ENCODE measurements at regions of chr14 and their contacts with region 1.

Region 1: DNA sequence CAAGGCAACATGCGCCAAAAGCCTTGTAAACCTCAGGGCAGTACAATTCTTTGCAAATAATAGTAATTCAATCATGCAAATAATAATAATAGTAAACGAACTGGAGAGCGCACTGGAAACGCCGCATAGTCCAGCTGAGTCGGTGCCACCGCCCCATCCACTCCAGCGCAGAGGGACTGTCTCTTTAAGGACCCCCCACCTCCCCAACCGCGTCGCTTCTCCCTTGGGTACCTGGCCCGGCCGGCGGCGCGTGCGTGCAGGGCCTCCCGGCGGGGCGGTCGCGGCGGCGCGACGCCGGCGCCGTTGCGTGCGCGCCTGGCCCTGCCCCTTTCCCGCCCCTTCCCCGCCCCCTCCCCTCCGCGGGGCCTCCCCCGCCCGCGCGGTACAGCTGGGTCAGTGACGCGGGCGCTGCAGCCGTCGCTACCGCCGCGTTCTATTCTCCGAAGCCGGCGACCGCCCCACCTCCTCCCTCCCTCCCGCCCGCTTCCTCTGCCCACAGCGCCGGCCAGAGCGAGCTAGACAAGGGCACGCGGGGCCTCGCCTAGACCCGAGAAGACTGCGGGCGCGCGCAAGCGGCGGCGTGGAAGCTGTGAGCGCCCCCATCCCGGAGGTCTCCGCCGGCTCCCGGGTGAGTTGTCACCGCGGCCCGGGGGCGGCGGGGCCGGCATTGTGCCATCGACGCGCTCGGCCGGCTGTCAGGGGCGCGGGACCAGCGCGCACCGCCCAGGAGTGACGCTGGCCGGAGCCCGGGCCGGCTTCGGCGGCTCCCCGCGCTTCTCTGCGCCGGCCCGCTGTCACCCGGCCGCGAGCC is at the start of gene SUSD6:
- DNase-seq: peak; percentile 79 to 94 (median 87)
- ATAC-seq: peak; percentile 84
- H3K4me3 ChIP-seq: peak within 1 kb of the TSS; percentile 57 to 67
- H3K4me3 Mint-ChIP-seq: peak within 1 kb of the TSS; percentile 89
- H3K27ac ChIP-seq: peak within 1 kb of the TSS; percentile 62 to 90
- H3K27ac Mint-ChIP-seq: peak within 1 kb of the TSS; percentile 100
- H3K4me1 ChIP-seq: peaks cover 54% of the 10 kb centered on the region
- H3K4me1 Mint-ChIP-seq: peaks cover 54% of the 10 kb centered on the region
- H3K27me3 ChIP-seq: no peaks in the 10 kb centered on the region
- H3K27me3 Mint-ChIP-seq: no peaks in the 10 kb centered on the region
- CTCF ChIP-seq: no peak
- total RNA-seq, gene SUSD6: 86.4 to 92.2 TPM

Region 2: GRCh38 chr14:69153131-69153872 is 458.1 kb before region 1 on chr14:
- CTCF ChIA-PET with region 1: no interaction called
- POLR2A ChIA-PET with region 1: no interaction called
- intact Hi-C with region 1: loop called (anchors 2 kb)
- DNase-seq: peak; percentile 87 to 98 (median 93)
- ATAC-seq: peak; percentile 91
- H3K4me3 ChIP-seq: peak overlapping the region; percentile 93 to 95
- H3K4me3 Mint-ChIP-seq: peak overlapping the region; percentile 89
- H3K27ac ChIP-seq: peak overlapping the region; percentile 51 to 69
- H3K27ac Mint-ChIP-seq: peak overlapping the region; percentile 95
- H3K4me1 ChIP-seq: peaks cover 36% of the 10 kb centered on the region
- H3K4me1 Mint-ChIP-seq: peaks cover 33% of the 10 kb centered on the region
- H3K27me3 ChIP-seq: no peaks in the 10 kb centered on the region
- H3K27me3 Mint-ChIP-seq: no peaks in the 10 kb centered on the region
- CTCF ChIP-seq: no peak

Region 3: GRCh38 chr14:69535230-69535848 is 76.1 kb before region 1 on chr14:
- CTCF ChIA-PET with region 1: no interaction called
- POLR2A ChIA-PET with region 1: no interaction called
- intact Hi-C with region 1: no loop called
- DNase-seq: no peak
- ATAC-seq: no peak
- H3K4me3 ChIP-seq: no peak overlapping the region
- H3K4me3 Mint-ChIP-seq: no peak overlapping the region
- H3K27ac ChIP-seq: no peak overlapping the region
- H3K27ac Mint-ChIP-seq: no peak overlapping the region
- H3K4me1 ChIP-seq: no peaks in the 10 kb centered on the region
- H3K4me1 Mint-ChIP-seq: no peaks in the 10 kb centered on the region
- H3K27me3 ChIP-seq: no peaks in the 10 kb centered on the region
- H3K27me3 Mint-ChIP-seq: peaks cover 40% of the 10 kb centered on the region
- CTCF ChIP-seq: no peak

Region 4: GRCh38 chr14:69586404-69586803 is 25.0 kb before region 1 on chr14:
- CTCF ChIA-PET with region 1: interaction called, 59 read pairs
- POLR2A ChIA-PET with region 1: no interaction called
- intact Hi-C with region 1: no loop called
- DNase-seq: no peak
- ATAC-seq: no peak
- H3K4me3 ChIP-seq: no peak overlapping the region
- H3K4me3 Mint-ChIP-seq: no peak overlapping the region
- H3K27ac ChIP-seq: no peak overlapping the region
- H3K27ac Mint-ChIP-seq: no peak overlapping the region
- H3K4me1 ChIP-seq: no peaks in the 10 kb centered on the region
- H3K4me1 Mint-ChIP-seq: no peaks in the 10 kb centered on the region
- H3K27me3 ChIP-seq: no peaks in the 10 kb centered on the region
- H3K27me3 Mint-ChIP-seq: peaks cover 5% of the 10 kb centered on the region
- CTCF ChIP-seq: no peak

Region 5: DNA sequence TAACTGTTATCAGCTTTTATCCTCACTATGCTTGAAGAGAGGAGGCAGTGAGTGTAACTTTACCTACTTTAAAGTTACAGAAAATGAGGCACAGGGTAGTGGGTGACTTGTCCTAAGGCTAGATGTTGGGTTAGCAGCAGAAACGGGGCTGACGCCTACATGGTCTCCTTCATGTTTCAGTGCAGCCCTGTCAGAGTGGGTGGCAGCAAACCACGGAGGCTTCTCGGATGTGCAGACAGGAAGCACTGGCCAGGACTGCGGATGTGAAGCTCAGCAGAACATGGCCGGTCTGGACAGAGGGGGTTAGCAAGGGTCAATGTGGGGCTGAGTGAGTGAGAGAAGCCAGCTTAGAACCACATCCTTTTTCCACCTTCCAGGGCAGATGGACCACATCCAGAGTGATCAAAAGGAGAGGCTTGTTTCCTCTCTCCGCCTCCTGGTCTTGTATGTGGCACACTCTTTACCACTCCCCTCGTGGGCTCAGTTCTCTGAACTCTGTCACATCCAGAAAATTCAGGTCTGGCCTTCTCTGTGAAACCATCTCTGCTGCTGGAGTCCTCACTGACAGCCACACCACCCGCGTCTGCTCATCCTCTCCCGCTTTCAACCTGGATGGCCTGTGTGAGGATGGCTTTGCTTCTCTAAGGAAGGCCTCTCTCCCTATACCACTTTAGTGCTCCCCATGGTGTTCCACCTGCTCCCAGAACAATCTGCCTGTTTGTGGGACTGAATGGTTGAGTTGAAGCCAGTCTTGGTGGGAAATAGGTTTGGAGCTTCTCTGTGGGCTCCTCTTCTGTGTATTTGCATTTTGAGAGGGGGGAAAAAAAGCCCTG is 14.1 kb after region 1 on chr14:
- CTCF ChIA-PET with region 1: interaction called, 7 read pairs
- POLR2A ChIA-PET with region 1: interaction called, 12 read pairs
- intact Hi-C with region 1: loop called in 1 of 2 experiments (anchors 1 kb)
- DNase-seq: peak; percentile 37 to 81 (median 71)
- ATAC-seq: peak; percentile 90
- H3K4me3 ChIP-seq: peak overlapping the region; percentile 9 to 21
- H3K4me3 Mint-ChIP-seq: peak overlapping the region; percentile 74
- H3K27ac ChIP-seq: peak overlapping the region; percentile 39 to 75
- H3K27ac Mint-ChIP-seq: peak overlapping the region; percentile 90
- H3K4me1 ChIP-seq: peaks cover 70% of the 10 kb centered on the region
- H3K4me1 Mint-ChIP-seq: peaks cover 87% of the 10 kb centered on the region
- H3K27me3 ChIP-seq: no peaks in the 10 kb centered on the region
- H3K27me3 Mint-ChIP-seq: no peaks in the 10 kb centered on the region
- CTCF ChIP-seq: no peak

Region 6: DNA sequence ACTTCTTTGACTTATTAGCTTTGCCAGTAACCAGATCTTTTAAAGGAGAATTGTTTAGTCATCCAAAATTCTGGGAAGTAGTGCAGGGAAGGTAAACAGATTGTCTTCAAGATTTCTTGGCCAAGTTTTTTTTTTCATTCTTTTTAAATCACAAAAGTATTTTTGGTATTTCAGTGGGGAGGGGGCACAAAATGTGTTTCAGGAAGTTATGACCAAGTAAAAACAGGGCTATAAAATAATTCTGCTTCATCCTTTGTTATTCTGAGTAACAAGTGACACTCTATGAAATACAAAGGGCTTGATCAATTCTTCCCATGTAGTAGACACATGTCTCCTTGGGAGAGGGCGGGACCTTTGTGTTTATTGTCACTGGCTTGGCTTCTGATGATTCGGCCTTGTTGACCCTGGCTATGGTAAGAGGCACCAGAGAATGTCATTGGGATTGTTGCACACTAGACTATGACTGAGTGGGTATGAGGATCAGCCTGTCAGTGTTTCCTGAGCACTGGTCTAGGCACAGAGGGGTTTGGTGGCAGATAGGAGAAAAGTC is 55.4 kb after region 1 on chr14:
- CTCF ChIA-PET with region 1: no interaction called
- POLR2A ChIA-PET with region 1: no interaction called
- intact Hi-C with region 1: loop called in 1 of 2 experiments (anchors 5 kb)
- DNase-seq: no peak
- ATAC-seq: no peak
- H3K4me3 ChIP-seq: no peak overlapping the region
- H3K4me3 Mint-ChIP-seq: peak overlapping the region; percentile 46
- H3K27ac ChIP-seq: no peak overlapping the region
- H3K27ac Mint-ChIP-seq: peak overlapping the region; percentile 65
- H3K4me1 ChIP-seq: peaks cover 39% of the 10 kb centered on the region
- H3K4me1 Mint-ChIP-seq: peaks cover 88% of the 10 kb centered on the region
- H3K27me3 ChIP-seq: no peaks in the 10 kb centered on the region
- H3K27me3 Mint-ChIP-seq: no peaks in the 10 kb centered on the region
- CTCF ChIP-seq: no peak

Region 7: GRCh38 chr14:69766984-69767368 is 155.6 kb after region 1 on chr14 and contains the start of gene SRSF5:
- CTCF ChIA-PET with region 1: no interaction called
- POLR2A ChIA-PET with region 1: interaction called, 38 read pairs
- intact Hi-C with region 1: loop called (anchors 1 kb)
- DNase-seq: peak; percentile 86 to 97 (median 96)
- ATAC-seq: peak; percentile 80
- H3K4me3 ChIP-seq: peak within 1 kb of the TSS; percentile 78 to 88
- H3K4me3 Mint-ChIP-seq: peak within 1 kb of the TSS; percentile 99
- H3K27ac ChIP-seq: peak within 1 kb of the TSS; percentile 97 to 99
- H3K27ac Mint-ChIP-seq: peak within 1 kb of the TSS; percentile 100
- H3K4me1 ChIP-seq: peaks cover 50% of the 10 kb centered on the region
- H3K4me1 Mint-ChIP-seq: peaks cover 67% of the 10 kb centered on the region
- H3K27me3 ChIP-seq: no peaks in the 10 kb centered on the region
- H3K27me3 Mint-ChIP-seq: no peaks in the 10 kb centered on the region
- CTCF ChIP-seq: no peak
- total RNA-seq, gene SRSF5: 1,544 to 1,597 TPM

Region 8: GRCh38 chr14:70809543-70810244 is 1198.3 kb after region 1 on chr14:
- CTCF ChIA-PET with region 1: no interaction called
- POLR2A ChIA-PET with region 1: no interaction called
- intact Hi-C with region 1: loop called in 1 of 2 experiments (anchors 5 kb)
- DNase-seq: peak; percentile 70 to 95 (median 87)
- ATAC-seq: peak; percentile 79
- H3K4me3 ChIP-seq: peak overlapping the region; percentile 58 to 65
- H3K4me3 Mint-ChIP-seq: no peak overlapping the region
- H3K27ac ChIP-seq: peak overlapping the region; percentile 30 to 56
- H3K27ac Mint-ChIP-seq: peak overlapping the region; percentile 80
- H3K4me1 ChIP-seq: peaks cover 12% of the 10 kb centered on the region
- H3K4me1 Mint-ChIP-seq: peaks cover 10% of the 10 kb centered on the region
- H3K27me3 ChIP-seq: no peaks in the 10 kb centered on the region
- H3K27me3 Mint-ChIP-seq: no peaks in the 10 kb centered on the region
- CTCF ChIP-seq: no peak

Measured in CD8-positive, alpha-beta T cell (primary cell).